Left cardiac atrium (tissue), 4 donors: ENCODE measurements at regions of chr6 and their contacts with region 1.

Region 1: GRCh38 chr6:107657755-107658461 is 166.2 kb downstream of the SCML4 start:
- DNase-seq: peak; percentile 67
- ATAC-seq: peak; percentile 65 to 73

Region 2: GRCh38 chr6:107489636-107490565 is 168.0 kb before region 1 on chr6 and contains the start of gene SOBP:
- intact Hi-C with region 1: loop called (anchors 5 to 10 kb)
- DNase-seq: peak; percentile 76
- ATAC-seq: peak; percentile 59 to 74
- total RNA-seq, gene SOBP: 13.6 to 14.4 TPM

Region 3: DNA sequence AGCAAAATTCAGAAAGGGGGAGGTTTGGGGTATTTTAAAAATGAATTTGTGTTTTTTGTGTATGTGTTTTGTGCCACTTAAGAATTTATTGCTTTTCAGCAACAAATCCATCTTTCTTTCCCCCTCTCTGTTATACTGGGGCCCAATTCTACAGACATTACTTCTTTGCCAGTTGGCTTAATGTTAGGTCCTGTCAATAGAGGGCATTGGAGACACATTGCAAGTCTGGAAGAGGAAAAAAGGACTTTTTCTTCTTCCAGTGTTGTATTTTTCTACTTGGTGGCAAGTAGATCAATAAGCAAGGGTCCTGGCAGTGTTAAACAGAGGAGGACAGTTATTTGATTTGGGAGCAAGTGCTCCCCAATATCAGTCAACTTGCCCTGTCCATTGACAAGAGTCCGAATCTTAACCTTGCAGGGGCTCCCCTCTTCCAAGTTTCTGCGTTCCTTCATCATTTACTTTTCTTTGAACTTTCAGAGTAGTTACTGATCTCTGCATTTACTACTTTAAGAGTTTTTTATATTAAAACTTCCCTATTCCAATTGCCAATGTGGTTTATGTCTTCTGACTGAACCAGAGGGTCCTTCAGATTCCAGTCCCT is 142.8 kb after region 1 on chr6:
- intact Hi-C with region 1: no loop called
- DNase-seq: no peak
- ATAC-seq: no peak

Region 4: DNA sequence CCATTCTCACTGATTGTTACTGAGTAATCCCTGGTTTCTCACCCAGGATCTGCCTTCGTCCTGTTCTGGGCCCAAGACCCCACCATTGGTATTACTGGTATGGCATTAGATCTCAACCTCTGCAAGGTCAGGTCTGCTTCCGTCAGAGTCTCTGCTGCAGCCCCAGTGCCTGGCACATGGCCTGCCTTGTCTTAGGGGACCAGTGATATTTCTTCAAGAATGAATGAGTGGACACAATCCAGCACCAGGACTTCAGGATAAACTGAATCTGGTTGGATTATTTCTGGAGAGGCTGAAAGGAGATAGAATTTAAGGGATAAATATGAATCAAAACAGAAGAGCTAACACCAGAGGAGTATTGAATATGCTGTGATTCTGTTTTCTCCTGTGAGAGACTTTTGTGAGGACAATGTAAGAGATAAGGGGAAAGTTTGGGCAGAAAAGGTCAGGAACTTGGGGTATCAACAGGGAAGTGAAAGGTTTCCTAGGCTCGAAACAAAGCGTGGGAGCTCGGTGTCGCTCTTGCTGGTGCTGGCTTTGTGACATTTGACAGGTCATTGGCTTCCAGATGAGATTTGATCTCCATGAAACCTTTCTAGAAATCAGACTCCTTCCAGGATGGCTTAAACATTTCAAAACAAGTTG is 362.7 kb after region 1 on chr6:
- intact Hi-C with region 1: no loop called
- DNase-seq: peak; percentile 23
- ATAC-seq: no peak